ENCODE measurements at regions of chr19 and their contacts with region 1.

Region 1: DNA sequence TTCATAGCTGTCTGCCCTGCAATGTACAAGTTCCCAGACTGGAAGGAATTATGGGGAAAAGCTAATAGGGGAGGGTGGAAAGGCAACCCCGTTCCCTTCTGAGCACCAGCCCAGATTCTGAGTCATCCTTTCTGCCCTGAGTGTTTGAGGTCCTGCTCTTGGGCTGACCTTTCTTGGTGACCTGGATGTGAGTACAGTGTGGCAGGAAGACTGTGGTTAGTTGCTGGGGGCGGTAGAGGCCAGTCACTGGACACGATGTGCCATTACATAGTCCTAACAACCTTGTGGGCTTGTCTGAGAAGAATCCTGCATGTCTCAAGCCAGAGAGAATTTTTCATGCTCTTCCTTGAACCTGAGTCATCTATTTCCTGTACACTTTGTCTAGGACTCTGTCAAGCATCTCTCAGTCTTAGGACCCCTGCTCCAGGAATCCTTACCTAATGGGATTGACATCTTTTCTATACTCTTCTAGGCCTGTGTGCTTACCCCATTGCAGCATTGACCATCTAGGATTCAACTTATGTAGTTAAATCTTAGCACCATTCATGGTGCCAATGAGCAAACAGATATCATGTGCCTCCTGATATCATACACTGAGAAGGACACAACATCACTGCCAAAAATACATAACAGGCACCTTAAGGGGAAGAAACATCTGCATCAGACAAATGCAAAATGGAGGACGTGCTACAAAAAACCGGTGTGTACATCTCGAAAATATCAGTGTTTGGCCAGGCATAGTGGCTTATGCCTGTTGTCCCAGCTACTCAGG is 8.1 kb upstream of the ANGPTL4 start:
- DNase-seq: no peak
- H3K4me3 ChIP-seq: no peak overlapping the region
- H3K27ac ChIP-seq: peak overlapping the region in 3 of 8 donors; percentile 18 to 49 (median 35)
- H3K4me1 ChIP-seq: peaks cover 0 to 46% (median 26%) of the 10 kb centered on the region in 6 donors
- H3K27me3 ChIP-seq: peaks cover 0 to 36% (median 0%) of the 10 kb centered on the region in 7 donors
- CTCF ChIP-seq: no peak
- POLR2A ChIP-seq: no peak

Region 2: DNA sequence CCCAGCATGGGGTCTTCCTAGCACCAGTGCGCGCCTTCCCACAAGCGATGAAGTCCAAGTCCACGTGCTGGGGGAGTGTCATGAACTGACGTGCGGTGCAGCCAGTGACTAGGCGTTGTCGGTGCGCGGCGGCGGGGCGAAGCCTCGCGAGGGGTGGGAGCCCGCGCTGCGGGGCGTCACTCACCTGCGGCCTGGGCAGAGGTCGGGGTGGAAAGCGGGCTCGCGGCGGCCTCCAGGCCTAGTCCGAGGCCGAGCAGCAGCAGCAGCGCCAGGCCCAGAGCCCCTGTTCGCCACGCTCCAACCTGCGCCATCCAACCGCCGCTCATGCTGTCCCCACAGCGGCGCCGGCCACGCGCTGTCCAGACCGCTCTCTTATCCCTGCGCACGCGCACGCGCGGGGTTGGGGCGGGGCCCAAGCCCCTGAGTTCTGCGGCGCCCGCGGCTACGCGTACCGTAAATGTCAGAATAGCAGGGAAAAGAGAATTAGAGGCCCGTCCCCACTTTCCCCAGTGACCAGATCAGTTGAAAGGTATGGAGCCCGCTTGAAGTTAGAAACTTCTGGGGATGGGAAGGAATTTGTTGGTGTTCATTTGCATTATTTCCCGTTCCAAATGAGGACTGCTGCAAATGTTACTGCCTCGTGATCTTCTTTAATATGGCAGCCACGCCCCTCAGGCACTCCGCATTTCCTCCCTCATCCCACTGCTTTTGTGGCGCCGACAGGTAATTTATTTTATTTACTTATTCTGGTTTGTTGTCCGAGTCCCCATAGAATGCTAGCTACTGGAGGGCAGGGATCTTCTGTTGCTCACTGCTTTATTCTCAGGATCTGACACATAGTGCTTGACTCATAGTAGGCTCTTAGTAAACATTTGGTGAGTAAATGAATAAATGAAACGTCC is 47.6 kb before region 1 on chr19 and contains the start of gene CD320:
- intact Hi-C with region 1: no loop called
- DNase-seq: peak; percentile 95
- H3K4me3 ChIP-seq: peak within 1 kb of the TSS; percentile 54 to 83 (median 70)
- H3K27ac ChIP-seq: peak within 1 kb of the TSS; percentile 61 to 88 (median 84)
- H3K4me1 ChIP-seq: peaks cover 8 to 84% (median 58%) of the 10 kb centered on the region in 6 donors
- H3K27me3 ChIP-seq: no peaks in the 10 kb centered on the region
- CTCF ChIP-seq: no peak
- POLR2A ChIP-seq: peak in 1 of 3 donors; percentile 13
- total RNA-seq, gene CD320: 35.8 to 131 (median 73.3) TPM

Region 3: DNA sequence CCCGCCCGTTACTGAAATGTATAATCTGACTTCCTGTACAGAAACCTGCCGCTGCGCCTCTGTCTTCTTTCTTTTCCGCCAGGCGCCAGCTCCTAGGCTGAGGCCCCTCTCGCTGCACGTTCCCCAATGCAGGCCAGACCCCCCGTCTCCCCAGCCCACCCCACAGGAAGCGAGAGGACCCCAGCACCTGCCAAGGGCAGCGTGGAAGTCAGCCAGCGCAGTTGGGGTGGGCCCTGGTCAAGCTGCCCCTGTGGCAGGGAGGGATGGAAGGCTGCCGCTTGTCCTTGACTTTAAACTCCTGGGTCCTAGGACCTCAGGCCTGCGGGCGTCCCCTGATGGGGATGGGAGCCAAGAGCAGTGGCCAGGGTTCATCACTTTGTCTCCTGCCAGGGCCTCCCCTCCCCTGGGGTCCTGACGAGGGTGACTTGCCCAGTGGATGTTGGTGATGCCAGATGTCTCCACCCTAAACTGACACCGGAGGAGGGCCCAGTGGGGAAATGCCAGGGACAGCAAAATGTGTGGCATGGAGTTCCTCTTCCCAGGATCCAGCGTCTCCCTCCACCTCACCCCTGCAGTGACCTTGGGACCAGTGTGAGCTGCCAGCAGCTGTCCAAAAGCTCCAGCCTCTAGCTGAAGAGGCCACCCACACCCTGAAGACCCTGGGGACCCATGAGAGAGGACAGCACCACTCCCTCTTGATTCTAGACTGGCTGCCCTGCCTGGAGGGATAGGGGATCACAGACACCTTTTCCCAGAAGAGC is 48.8 kb after region 1 on chr19:
- intact Hi-C with region 1: loop called (anchors 10 kb)
- DNase-seq: no peak
- H3K4me3 ChIP-seq: no peak overlapping the region
- H3K27ac ChIP-seq: peak overlapping the region in 5 of 8 donors; percentile 4 to 48 (median 22)
- H3K4me1 ChIP-seq: peaks cover 0 to 24% (median 5%) of the 10 kb centered on the region in 6 donors
- H3K27me3 ChIP-seq: no peaks in the 10 kb centered on the region
- CTCF ChIP-seq: no peak
- POLR2A ChIP-seq: no peak

Region 4: GRCh38 chr19:8513687-8514504 is 158.1 kb after region 1 on chr19 and contains the start of gene ZNF414:
- intact Hi-C with region 1: loop called (anchors 10 kb)
- DNase-seq: peak; percentile 98
- H3K4me3 ChIP-seq: peak within 1 kb of the TSS; percentile 40 to 71 (median 56)
- H3K27ac ChIP-seq: peak within 1 kb of the TSS; percentile 96 to 99 (median 98)
- H3K4me1 ChIP-seq: peaks cover 24 to 73% (median 65%) of the 10 kb centered on the region in 6 donors
- H3K27me3 ChIP-seq: no peaks in the 10 kb centered on the region
- CTCF ChIP-seq: peak in 5 of 11 experiments; percentile 20 to 44 (median 34)
- POLR2A ChIP-seq: peak in 2 of 3 donors; percentile 40 to 88
- total RNA-seq, gene ZNF414: 12.0 to 31.0 (median 26.6) TPM

Region 5: DNA sequence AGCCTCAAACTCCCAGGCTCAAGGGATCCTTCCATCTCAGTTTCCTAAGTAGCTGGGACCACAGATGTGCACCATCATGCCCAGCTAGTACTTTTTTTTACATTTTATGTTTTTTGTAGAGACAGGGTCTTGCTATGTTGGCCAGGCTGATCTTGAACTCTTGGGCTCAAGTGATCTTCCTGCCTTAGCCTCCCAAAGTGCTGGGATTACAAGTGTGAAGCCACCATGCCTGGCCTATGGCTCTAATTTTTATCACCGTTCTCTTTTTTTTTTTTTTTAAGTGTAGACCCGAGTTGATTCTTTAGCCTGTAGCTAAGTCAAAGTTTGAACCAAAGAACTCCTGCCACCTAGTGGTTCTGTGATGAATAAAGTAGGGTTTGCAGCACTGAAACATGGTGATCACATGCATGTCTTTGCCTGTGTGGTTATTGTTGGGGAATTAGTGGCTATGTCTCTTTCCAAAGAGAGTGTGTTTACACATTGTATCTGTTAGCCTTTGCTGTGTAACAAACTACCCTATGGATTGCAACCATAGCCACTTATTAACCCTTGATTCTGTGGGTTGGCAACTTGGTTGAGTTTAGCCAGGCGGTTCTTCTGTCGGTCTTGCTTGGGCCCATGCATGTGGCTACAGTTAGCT is 286.2 kb after region 1 on chr19:
- intact Hi-C with region 1: loop called (anchors 5 kb)
- DNase-seq: no peak
- H3K4me3 ChIP-seq: peak overlapping the region in 1 of 8 donors; percentile 51
- H3K27ac ChIP-seq: peak overlapping the region in 4 of 8 donors; percentile 32 to 92 (median 71)
- H3K4me1 ChIP-seq: peaks cover 0 to 64% (median 19%) of the 10 kb centered on the region in 6 donors
- H3K27me3 ChIP-seq: peaks cover 0 to 53% (median 0%) of the 10 kb centered on the region in 7 donors
- CTCF ChIP-seq: peak in 10 of 11 experiments; percentile 47 to 80 (median 66)
- POLR2A ChIP-seq: no peak

Measured in spleen (tissue), 13 donors.